Calu3 (cell line): ENCODE measurements at regions of chr4 and their contacts with region 1.

Region 1: DNA sequence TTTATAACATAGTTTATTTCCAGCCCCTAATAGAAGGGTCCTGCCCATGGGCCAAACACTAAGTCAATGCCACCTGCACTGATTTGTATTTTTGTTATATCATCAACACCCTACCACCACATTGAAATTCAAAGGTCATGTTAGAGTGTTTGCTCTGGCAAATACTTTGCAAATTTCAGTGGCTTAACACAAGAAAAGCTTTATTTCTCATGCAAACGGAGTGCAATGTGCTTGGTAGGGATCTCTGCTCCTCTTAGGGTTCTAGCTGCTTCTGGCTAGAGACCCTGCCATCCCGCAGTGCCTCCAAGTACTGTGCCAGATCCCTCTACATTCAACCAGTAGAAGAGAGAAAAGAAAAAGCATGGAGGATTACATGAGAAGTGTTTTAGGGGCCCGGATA is 230.8 kb upstream of the TET2 start:
- DNase-seq: no peak
- H3K4me3 Mint-ChIP-seq: no peak overlapping the region
- H3K27ac Mint-ChIP-seq: no peak overlapping the region
- H3K4me1 Mint-ChIP-seq: no peaks in the 10 kb centered on the region
- H3K27me3 Mint-ChIP-seq: no peaks in the 10 kb centered on the region
- CTCF ChIP-seq: no peak

Region 2: DNA sequence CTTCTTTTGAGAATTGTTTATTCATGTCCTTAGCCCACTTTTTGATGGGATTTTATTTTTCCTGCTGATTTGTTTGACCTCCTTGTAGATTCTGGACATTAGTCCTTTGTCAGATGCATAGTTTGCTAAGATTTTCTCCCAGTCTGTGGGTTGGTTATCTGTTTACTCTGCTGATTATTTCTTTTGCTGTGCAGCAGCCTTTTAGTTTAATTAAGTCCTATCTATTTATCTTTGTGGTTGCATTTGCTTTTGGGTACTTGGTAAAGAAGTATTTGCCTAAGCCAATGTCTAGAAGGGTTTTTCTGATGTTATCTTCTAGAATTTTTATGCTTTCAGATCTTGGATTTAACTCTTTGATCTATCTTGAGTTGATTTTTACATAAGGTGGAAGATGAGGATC is 244.4 kb before region 1 on chr4:
- CTCF ChIA-PET with region 1: no interaction called
- intact Hi-C with region 1: no loop called
- DNase-seq: no peak
- H3K4me3 Mint-ChIP-seq: no peak overlapping the region
- H3K27ac Mint-ChIP-seq: no peak overlapping the region
- H3K4me1 Mint-ChIP-seq: no peaks in the 10 kb centered on the region
- H3K27me3 Mint-ChIP-seq: no peaks in the 10 kb centered on the region
- CTCF ChIP-seq: no peak

Region 3: GRCh38 chr4:105215609-105216313 is 299.9 kb after region 1 on chr4:
- CTCF ChIA-PET with region 1: interaction called, 10 read pairs
- intact Hi-C with region 1: no loop called
- DNase-seq: no peak
- H3K4me3 Mint-ChIP-seq: no peak overlapping the region
- H3K27ac Mint-ChIP-seq: peak overlapping the region; percentile 2
- H3K4me1 Mint-ChIP-seq: peaks cover 20% of the 10 kb centered on the region
- H3K27me3 Mint-ChIP-seq: no peaks in the 10 kb centered on the region
- CTCF ChIP-seq: no peak